WTC11 (cell line): ENCODE measurements at regions of chr6 and their contacts with region 1.

Region 1: GRCh38 chr6:27687154-27688013 is 214.5 kb upstream of the ZNF184 start:
- DNase-seq: peak; percentile 95
- ATAC-seq: peak; percentile 73
- H3K4me3 Mint-ChIP-seq: peak overlapping the region; percentile 92
- H3K27ac Mint-ChIP-seq: peak overlapping the region; percentile 76
- H3K4me1 Mint-ChIP-seq: no peaks in the 10 kb centered on the region
- H3K27me3 Mint-ChIP-seq: peaks cover 26% of the 10 kb centered on the region
- CTCF ChIP-seq: peak; percentile 31; the same call in 1 of the 2 replicates

Region 2: GRCh38 chr6:27541212-27541931 is 146.0 kb before region 1 on chr6:
- CTCF ChIA-PET with region 1: no interaction called
- POLR2A ChIA-PET with region 1: no interaction called
- DNase-seq: peak; percentile 84
- ATAC-seq: peak; percentile 38
- H3K4me3 Mint-ChIP-seq: peak overlapping the region; percentile 47
- H3K27ac Mint-ChIP-seq: no peak overlapping the region
- H3K4me1 Mint-ChIP-seq: peaks cover 19% of the 10 kb centered on the region
- H3K27me3 Mint-ChIP-seq: peaks cover 32% of the 10 kb centered on the region
- CTCF ChIP-seq: no peak

Region 3: GRCh38 chr6:27601668-27602254 is 85.6 kb before region 1 on chr6:
- CTCF ChIA-PET with region 1: interaction called, 13 read pairs
- POLR2A ChIA-PET with region 1: no interaction called
- DNase-seq: peak; percentile 59
- ATAC-seq: peak; percentile 55
- H3K4me3 Mint-ChIP-seq: peak overlapping the region; percentile 94
- H3K27ac Mint-ChIP-seq: 0 out of 2 replicates have a peak overlapping the region, but pooled peaks have one; percentile 19
- H3K4me1 Mint-ChIP-seq: peaks cover 10% of the 10 kb centered on the region
- H3K27me3 Mint-ChIP-seq: peaks cover 35% of the 10 kb centered on the region
- CTCF ChIP-seq: no peak

Region 4: GRCh38 chr6:27668442-27669294 is 18.7 kb before region 1 on chr6:
- CTCF ChIA-PET with region 1: interaction called, 13 read pairs
- POLR2A ChIA-PET with region 1: interaction called, 3 read pairs
- DNase-seq: peak; percentile 89
- ATAC-seq: peak; percentile 22
- H3K4me3 Mint-ChIP-seq: peak overlapping the region; percentile 87
- H3K27ac Mint-ChIP-seq: no peak overlapping the region
- H3K4me1 Mint-ChIP-seq: peaks cover 24% of the 10 kb centered on the region
- H3K27me3 Mint-ChIP-seq: peaks cover 55% of the 10 kb centered on the region
- CTCF ChIP-seq: no peak

Region 5: DNA sequence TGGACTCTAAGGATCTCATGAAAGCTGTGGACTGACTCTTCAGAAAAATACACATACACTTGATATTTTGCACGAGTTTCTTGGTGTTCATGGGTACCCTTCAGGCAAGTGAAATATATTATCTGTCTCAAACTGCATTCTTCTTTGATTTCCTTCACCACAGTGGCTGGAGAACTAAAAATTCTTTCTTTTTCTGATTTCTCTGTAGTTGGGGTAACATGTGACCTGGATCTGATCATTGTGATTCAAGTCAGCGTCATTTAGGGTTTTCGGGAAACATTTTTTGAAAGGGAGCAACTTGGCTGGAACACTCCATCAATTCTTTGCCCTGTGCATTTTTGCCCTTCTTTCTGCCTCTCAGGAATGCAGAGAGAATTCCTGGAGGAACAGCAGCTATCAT is 19.0 kb after region 1 on chr6:
- CTCF ChIA-PET with region 1: no interaction called
- POLR2A ChIA-PET with region 1: no interaction called
- DNase-seq: no peak
- ATAC-seq: no peak
- H3K4me3 Mint-ChIP-seq: no peak overlapping the region
- H3K27ac Mint-ChIP-seq: no peak overlapping the region
- H3K4me1 Mint-ChIP-seq: no peaks in the 10 kb centered on the region
- H3K27me3 Mint-ChIP-seq: no peaks in the 10 kb centered on the region
- CTCF ChIP-seq: no peak

Region 6: DNA sequence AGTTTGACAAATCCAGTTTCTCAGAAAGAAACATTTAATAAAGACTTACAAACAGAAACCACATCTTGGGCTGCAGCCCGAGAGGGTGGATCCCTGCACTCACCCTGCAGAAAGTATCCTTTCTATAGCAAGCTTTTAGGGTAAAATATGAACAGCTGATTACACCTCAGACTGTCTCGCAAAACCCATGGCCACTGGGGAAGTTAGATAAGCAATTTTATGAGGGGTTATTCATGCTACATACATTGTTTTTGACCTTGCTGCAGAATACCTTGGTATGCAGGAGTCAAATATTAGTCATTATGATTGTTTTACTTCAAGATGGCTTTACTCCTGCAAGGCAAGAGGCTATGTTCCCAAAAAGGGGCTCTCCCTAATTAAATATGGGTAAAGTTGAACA is 97.9 kb after region 1 on chr6:
- CTCF ChIA-PET with region 1: no interaction called
- POLR2A ChIA-PET with region 1: no interaction called
- DNase-seq: no peak
- ATAC-seq: no peak
- H3K4me3 Mint-ChIP-seq: no peak overlapping the region
- H3K27ac Mint-ChIP-seq: no peak overlapping the region
- H3K4me1 Mint-ChIP-seq: peaks cover 6% of the 10 kb centered on the region
- H3K27me3 Mint-ChIP-seq: peaks cover 74% of the 10 kb centered on the region
- CTCF ChIP-seq: no peak

Region 7: GRCh38 chr6:28643017-28643740 is 955.8 kb after region 1 on chr6:
- CTCF ChIA-PET with region 1: no interaction called
- POLR2A ChIA-PET with region 1: no interaction called
- DNase-seq: peak; percentile 78
- ATAC-seq: peak; percentile 88
- H3K4me3 Mint-ChIP-seq: peak overlapping the region; percentile 78
- H3K27ac Mint-ChIP-seq: no peak overlapping the region
- H3K4me1 Mint-ChIP-seq: 0 out of 2 replicates have a peak, but pooled peaks cover 6% of the 10 kb centered on the region
- H3K27me3 Mint-ChIP-seq: peaks cover 9% of the 10 kb centered on the region
- CTCF ChIP-seq: no peak